AG04450 (cell line): ENCODE measurements at regions of chr9 and their contacts with region 1.

Region 1: GRCh38 chr9:109411798-109412352 is 86.2 kb downstream of the PTPN3 start:
- DNase-seq: peak; percentile 16
- H3K4me3 ChIP-seq: no peak overlapping the region
- H3K27ac ChIP-seq: no peak overlapping the region
- H3K27me3 ChIP-seq: no peaks in the 10 kb centered on the region
- CTCF ChIP-seq: peak; percentile 79

Region 2: DNA sequence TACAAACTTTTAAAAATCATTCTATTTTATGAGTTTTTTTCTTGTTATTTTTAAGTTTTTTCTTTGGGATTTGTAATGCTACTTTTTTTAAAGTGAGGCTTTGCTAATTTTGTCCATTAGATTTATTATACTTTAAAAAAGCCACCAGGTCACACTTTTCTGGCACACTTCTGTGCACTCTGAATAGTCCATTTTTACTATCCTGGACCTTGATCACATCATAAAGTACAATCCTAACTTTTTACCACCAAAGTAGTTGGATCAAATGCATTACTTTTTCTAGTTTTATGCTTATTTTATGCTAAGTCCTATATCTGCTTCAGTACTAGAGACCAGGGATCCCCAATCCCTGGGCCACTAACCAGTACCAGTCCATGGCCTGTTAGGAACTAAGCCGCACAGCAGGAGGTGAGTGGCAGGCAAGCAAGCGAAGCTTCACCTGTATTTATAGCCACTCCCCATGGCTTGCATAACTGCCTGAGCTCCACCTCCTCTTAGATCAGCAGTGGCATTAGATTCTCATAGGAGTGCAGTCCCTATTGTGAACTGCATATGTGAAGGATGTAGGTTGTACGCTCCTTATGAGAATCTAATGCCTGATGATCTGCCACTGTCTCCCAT is 260.8 kb before region 1 on chr9:
- CTCF ChIA-PET with region 1: no interaction called
- POLR2A ChIA-PET with region 1: no interaction called
- DNase-seq: no peak
- H3K4me3 ChIP-seq: no peak overlapping the region
- H3K27ac ChIP-seq: no peak overlapping the region
- H3K27me3 ChIP-seq: no peaks in the 10 kb centered on the region
- CTCF ChIP-seq: no peak

Region 3: GRCh38 chr9:109401168-109401989 is 10.5 kb before region 1 on chr9:
- CTCF ChIA-PET with region 1: interaction called, 10 read pairs
- POLR2A ChIA-PET with region 1: no interaction called
- DNase-seq: no peak
- H3K4me3 ChIP-seq: no peak overlapping the region
- H3K27ac ChIP-seq: no peak overlapping the region
- H3K27me3 ChIP-seq: no peaks in the 10 kb centered on the region
- CTCF ChIP-seq: peak; percentile 64